Endothelial cell of umbilical vein (primary cell): ENCODE measurements at regions of chr13 and their contacts with region 1.

Region 1: GRCh38 chr13:102845630-102846260 is at the start of gene ERCC5:
- DNase-seq: peak; percentile 94
- H3K4me3 ChIP-seq: peak within 1 kb of the TSS; percentile 75 to 97 (median 87)
- H3K27ac ChIP-seq: peak within 1 kb of the TSS; percentile 78
- H3K4me1 ChIP-seq: peaks cover 7% of the 10 kb centered on the region
- H3K27me3 ChIP-seq: no peaks in the 10 kb centered on the region
- CTCF ChIP-seq: no peak
- POLR2A ChIP-seq: peak; percentile 91
- total RNA-seq, gene ERCC5: 36.0 and 40.1 TPM in 2 replicates

Region 2: DNA sequence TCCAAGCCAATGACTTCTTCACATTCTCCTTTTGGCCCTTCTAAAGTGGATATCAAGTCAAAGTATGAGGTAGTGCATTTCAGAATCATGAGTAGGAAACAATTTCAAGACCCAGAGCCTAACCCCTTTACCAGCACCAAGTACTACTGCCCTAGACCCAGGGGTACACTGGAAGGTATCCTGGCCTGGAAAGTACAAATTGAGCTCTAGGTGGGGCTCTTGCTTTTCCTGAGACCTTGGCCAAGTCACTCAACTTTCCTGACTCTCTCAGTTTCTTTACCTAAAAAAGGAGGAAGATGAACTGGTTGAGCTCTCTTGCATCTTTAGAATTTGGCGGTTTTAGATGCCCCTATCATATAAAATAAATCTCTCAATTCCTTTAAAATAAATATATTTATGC is 648.6 kb before region 1 on chr13:
- CTCF ChIA-PET with region 1: no interaction called
- POLR2A ChIA-PET with region 1: no interaction called
- dilution Hi-C with region 1: no loop called
- intact Hi-C with region 1: loop called (anchors 5 kb)
- DNase-seq: no peak
- H3K4me3 ChIP-seq: no peak overlapping the region
- H3K27ac ChIP-seq: no peak overlapping the region
- H3K4me1 ChIP-seq: peaks cover 30% of the 10 kb centered on the region
- H3K27me3 ChIP-seq: no peaks in the 10 kb centered on the region
- CTCF ChIP-seq: no peak
- POLR2A ChIP-seq: no peak

Region 3: DNA sequence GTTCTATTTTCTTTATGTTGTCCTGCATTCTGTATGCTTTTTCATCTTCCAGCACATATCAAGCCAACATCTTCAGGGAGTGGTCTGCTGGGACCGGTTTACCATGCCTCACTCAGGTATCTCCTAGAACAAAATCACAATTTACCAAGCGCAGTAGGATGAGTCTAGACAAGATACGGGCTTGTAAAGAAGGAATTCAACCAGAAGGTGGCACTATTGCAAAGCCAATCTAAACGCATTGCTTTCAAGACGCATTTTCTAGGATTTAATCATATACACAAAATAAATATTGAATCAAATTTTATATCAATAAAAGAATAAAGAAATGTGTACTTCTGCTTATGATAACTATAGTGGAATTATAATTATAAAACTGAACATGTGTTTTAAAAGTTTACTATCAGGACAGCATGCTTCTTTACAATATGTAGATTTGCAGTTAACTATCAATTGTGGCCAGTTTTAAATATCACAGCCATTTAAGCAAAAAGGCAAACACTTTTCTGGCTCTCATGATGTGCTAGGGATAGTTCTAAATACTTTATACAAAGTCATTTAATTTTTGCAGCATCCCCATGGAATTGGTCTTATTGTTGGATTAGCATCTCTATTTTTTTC is 265.1 kb before region 1 on chr13:
- CTCF ChIA-PET with region 1: interaction called, 13 read pairs
- POLR2A ChIA-PET with region 1: no interaction called
- dilution Hi-C with region 1: loop called (anchors 25 kb)
- intact Hi-C with region 1: loop called (anchors 1 kb)
- DNase-seq: peak; percentile 74
- H3K4me3 ChIP-seq: no peak overlapping the region
- H3K27ac ChIP-seq: no peak overlapping the region
- H3K4me1 ChIP-seq: no peaks in the 10 kb centered on the region
- H3K27me3 ChIP-seq: peaks cover 20 to 22% of the 10 kb centered on the region in 2 experiments
- CTCF ChIP-seq: peak; percentile 49
- POLR2A ChIP-seq: no peak

Region 4: DNA sequence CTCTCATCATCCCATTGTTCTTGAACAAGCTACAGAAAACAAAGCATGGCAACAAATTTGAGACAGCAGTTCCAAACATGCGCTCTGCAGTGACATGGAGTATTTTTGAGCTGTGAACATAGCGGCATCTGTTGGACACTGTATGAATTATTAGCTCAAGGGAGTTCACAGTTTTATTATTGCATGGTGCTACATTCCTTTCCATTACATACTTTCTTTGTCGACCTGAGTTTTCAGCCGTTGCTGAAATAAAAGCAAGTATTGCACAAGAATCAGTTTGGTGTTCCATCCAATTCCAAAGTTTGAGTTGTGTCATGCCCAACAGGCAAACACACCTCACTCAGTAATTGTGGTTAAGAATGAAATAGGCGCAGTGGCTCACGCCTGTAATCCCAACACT is 120.8 kb before region 1 on chr13:
- CTCF ChIA-PET with region 1: interaction called, 17 read pairs
- POLR2A ChIA-PET with region 1: no interaction called
- dilution Hi-C with region 1: no loop called
- intact Hi-C with region 1: loop called (anchors 1 kb)
- DNase-seq: peak; percentile 76
- H3K4me3 ChIP-seq: no peak overlapping the region
- H3K27ac ChIP-seq: no peak overlapping the region
- H3K4me1 ChIP-seq: peaks cover 14% of the 10 kb centered on the region
- H3K27me3 ChIP-seq: no peaks in the 10 kb centered on the region
- CTCF ChIP-seq: peak; percentile 42
- POLR2A ChIP-seq: no peak

Region 5: DNA sequence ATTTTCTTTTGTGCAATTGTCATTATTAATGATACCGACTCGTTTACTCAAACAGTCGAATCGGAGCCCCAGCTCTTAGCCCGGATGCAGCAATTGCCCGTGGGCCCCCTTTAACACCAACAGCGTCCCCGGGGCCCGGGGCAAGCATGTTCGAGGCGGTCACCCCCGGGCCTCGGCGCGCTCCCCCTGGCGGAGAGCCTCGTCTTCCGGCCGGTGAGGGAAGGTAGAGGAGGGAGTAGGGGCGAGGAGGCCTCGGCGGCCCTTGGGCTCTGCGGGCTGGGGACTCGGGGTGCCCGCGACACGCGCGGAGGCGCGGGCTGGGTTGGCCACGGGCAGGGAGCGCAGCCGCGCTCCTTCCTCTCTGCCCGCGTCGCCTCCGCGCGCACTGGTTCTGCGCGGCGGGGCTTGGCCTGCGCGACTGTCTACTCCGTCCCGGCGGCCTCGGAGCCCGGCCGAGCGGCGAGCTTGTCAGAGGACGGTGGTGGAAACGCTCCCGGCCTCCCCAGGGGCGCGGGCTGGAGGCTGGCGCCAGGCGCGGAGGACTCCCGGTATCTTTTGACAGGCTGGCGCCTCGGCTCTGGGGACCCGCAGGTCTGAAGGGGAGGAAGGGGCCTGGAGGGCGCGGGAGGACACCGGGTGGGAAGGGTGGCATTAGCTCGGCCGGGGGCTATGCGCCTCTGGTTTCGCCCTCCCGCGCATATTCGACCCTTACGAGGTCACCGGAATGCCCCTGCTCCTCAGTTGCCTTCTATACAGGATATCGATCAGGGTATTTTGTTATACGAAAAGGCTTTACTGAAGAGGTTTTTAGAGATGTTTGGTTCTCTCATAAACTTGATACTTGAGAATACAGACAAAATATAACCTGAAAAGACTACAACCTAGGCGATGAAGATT is 45.4 kb before region 1 on chr13:
- CTCF ChIA-PET with region 1: interaction called, 17 read pairs
- POLR2A ChIA-PET with region 1: no interaction called
- dilution Hi-C with region 1: no loop called
- intact Hi-C with region 1: loop called (anchors 1 kb)
- DNase-seq: peak; percentile 79
- H3K4me3 ChIP-seq: peak overlapping the region; percentile 47 to 71 (median 56)
- H3K27ac ChIP-seq: peak overlapping the region; percentile 41
- H3K4me1 ChIP-seq: peaks cover 18% of the 10 kb centered on the region
- H3K27me3 ChIP-seq: no peaks in the 10 kb centered on the region
- CTCF ChIP-seq: peak; percentile 76 to 85
- POLR2A ChIP-seq: no peak